Sciatic nerve (tissue), 2 donors: ENCODE measurements at regions of chr3 and their contacts with region 1.

Region 1: DNA sequence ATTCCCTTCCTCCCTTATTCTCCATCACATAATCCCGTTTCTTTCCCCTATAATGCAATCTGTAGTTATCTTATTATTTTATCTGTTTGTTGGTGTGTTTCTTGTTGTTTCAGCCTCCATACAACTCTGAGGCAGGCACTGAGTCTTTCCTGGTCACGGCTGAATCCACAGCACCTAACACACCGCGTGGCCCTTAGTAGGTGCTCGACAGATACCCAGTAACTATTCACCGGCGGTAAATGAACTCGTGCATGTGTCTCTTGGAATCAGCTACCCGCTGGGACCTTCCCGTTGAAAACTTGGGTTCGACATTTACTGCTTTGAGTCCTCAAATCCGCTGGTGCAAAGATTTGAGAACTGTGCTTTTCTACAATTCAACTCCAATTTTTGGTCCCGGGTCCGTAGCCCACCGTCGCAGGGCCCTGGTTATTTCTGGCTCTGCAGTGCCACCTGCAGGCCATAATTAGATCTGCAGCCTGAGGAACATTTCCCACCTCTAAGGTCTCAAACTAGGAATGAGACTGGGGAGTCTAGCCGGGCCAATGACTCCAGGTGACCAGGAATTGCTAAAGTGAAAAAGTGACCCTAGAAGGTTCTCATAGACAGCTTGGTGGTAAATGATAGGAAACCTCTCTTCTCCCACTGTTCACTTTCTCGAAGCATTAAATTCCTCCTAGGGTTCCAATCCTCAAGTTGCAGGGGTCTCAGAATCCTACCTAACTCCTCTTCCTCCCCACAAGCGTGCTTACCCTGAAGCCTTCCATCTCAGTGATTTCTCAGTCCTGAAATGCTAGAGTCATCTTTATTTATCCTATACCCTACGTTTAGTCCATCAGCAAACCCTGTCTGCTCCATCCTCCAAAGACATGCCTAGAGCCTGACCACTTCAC is 40.0 kb upstream of the TRH start:
- DNase-seq: no peak
- ATAC-seq: peak; percentile 66

Region 2: DNA sequence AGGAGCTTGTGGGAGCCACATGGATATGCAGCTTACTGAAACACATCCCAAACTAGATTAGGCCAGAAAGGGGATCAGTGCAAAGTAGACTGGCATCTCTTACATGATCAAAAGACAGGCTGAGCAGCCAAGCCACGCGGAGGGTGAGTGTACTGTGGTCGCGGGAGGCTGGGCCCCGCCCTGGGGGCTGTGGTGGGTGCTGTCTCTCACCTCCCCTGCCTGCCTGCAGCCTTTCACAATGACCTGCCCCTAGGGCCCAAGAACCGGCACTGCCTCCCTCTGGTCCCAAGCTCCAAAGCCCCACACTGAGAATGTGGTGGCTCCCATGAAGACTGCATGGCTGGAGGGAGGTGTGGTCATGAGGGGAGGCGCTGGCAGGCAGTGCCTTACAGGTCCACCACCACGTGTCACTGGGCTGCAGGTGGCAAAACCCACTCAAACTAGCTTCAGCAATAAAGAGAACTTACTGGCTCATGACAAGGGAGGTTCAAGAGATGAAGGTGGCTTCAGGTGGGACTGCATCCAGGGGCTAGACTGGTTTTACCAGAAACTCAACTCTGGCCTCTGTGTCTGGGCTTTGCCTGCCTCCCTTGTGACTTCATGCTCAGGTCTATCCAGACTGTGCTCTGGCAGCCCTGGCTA is 300.6 kb before region 1 on chr3:
- intact Hi-C with region 1: loop called (anchors 10 kb)
- DNase-seq: no peak
- ATAC-seq: no peak

Region 3: DNA sequence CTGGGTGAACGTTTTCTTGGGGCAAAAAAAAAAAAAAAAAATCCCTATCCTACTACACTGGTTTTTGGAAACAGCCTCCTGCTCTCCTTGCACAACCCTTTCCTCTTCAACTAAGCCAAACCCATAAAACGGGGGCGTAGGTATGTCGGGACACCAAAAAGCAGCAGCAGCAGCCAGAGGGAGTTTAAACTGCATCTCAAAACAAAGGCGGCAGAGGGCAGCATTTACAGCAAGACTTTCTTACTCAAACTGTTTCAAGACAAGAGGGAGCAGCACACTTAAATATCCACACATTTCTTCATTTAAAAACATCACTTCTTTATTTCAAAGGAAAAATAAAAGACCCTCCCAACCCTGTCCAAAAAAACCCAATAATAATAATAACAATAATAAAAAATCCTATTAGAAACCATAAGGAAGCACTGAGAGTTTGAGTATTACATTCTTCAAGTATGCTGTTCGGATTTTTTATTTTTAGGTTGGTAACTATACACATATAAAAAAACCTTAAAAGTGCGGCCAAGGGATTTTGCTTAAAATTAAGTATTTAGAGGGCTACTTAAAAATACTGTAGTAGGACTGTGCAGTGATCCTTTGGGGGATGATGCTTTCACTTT is 284.1 kb before region 1 on chr3:
- intact Hi-C with region 1: loop called (anchors 5 kb)
- DNase-seq: peak; percentile 82
- ATAC-seq: peak; percentile 75

Region 4: GRCh38 chr3:129829640-129830039 is 104.8 kb before region 1 on chr3:
- intact Hi-C with region 1: no loop called
- DNase-seq: no peak
- ATAC-seq: peak; percentile 94